HepG2 (cell line): ENCODE measurements at regions of chr10 and their contacts with region 1.

Region 1: GRCh38 chr10:121886997-121887622 is 40.7 kb downstream of the ATE1 start:
- DNase-seq: peak; percentile 61
- ATAC-seq: peak; percentile 94
- H3K4me3 ChIP-seq: no peak overlapping the region
- H3K27ac ChIP-seq: no peak overlapping the region
- H3K4me1 ChIP-seq: no peaks in the 10 kb centered on the region
- H3K27me3 ChIP-seq: no peaks in the 10 kb centered on the region
- CTCF ChIP-seq: peak; percentile 87
- EP300 ChIP-seq: no peak
- POLR2A ChIP-seq: no peak
- RAD21 ChIP-seq: peak; percentile 59; the same call in 1 of the 2 replicates

Region 2: GRCh38 chr10:120948889-120949608 is 938.1 kb before region 1 on chr10:
- CTCF ChIA-PET with region 1: no interaction called
- POLR2A ChIA-PET with region 1: no interaction called
- in situ Hi-C with region 1: loop called (anchors 5 kb)
- intact Hi-C with region 1: no loop called
- DNase-seq: peak; percentile 21
- ATAC-seq: peak; percentile 99
- H3K4me3 ChIP-seq: peak overlapping the region in 2 of 3 experiments; percentile 5 to 42; a peak in 1 of 6 replicates
- H3K27ac ChIP-seq: no peak overlapping the region
- H3K4me1 ChIP-seq: no peaks in the 10 kb centered on the region
- H3K27me3 ChIP-seq: peaks cover 0 to 11% of the 10 kb centered on the region in 2 experiments; a peak in 3 of 5 replicates
- CTCF ChIP-seq: peak; percentile 89
- EP300 ChIP-seq: no peak
- POLR2A ChIP-seq: no peak
- RAD21 ChIP-seq: peak; percentile 97

Region 3: GRCh38 chr10:121734589-121735045 is 152.5 kb before region 1 on chr10:
- CTCF ChIA-PET with region 1: no interaction called
- POLR2A ChIA-PET with region 1: no interaction called
- in situ Hi-C with region 1: no loop called
- intact Hi-C with region 1: loop called (anchors 10 kb)
- DNase-seq: peak; percentile 28
- ATAC-seq: peak; percentile 81
- H3K4me3 ChIP-seq: peak overlapping the region; percentile 11 to 62 (median 48); a peak in 5 of 6 replicates
- H3K27ac ChIP-seq: no peak overlapping the region
- H3K4me1 ChIP-seq: peaks cover 16% of the 10 kb centered on the region
- H3K27me3 ChIP-seq: peaks cover 0 to 8% of the 10 kb centered on the region in 2 experiments; a peak in 1 of 5 replicates
- CTCF ChIP-seq: peak; percentile 67
- EP300 ChIP-seq: no peak
- POLR2A ChIP-seq: no peak
- RAD21 ChIP-seq: no peak

Region 4: DNA sequence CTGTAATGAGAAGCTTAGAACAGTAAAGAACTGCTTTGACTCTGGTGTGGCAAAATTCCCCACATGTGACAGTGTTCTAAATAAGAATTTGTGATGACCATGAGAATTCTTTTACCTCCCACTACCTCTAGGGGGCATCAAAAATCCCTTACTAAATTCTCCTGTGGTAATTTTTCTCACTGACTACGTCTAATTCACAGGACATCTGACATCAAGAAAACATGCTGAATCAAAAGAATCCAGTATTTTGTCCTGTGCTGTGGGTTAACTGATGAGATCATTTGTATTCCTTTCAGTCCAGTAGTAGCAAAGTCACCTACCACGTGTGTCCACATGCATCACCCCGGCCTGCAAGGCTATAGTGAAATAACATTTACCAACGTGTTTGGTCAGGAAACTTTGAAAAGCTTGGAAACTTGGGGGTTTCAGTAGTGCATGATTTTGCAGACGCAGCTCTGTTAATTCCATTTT is 63.1 kb before region 1 on chr10:
- CTCF ChIA-PET with region 1: interaction called, 32 read pairs
- POLR2A ChIA-PET with region 1: no interaction called
- in situ Hi-C with region 1: no loop called
- intact Hi-C with region 1: loop called (anchors 1 kb)
- DNase-seq: peak; percentile 44
- ATAC-seq: peak; percentile 68; the same call in 2 of the 3 replicates
- H3K4me3 ChIP-seq: no peak overlapping the region
- H3K27ac ChIP-seq: no peak overlapping the region
- H3K4me1 ChIP-seq: no peaks in the 10 kb centered on the region
- H3K27me3 ChIP-seq: no peaks in the 10 kb centered on the region
- CTCF ChIP-seq: peak; percentile 56
- EP300 ChIP-seq: no peak
- POLR2A ChIP-seq: no peak
- RAD21 ChIP-seq: no peak; the same call in 1 of the 2 replicates

Region 5: DNA sequence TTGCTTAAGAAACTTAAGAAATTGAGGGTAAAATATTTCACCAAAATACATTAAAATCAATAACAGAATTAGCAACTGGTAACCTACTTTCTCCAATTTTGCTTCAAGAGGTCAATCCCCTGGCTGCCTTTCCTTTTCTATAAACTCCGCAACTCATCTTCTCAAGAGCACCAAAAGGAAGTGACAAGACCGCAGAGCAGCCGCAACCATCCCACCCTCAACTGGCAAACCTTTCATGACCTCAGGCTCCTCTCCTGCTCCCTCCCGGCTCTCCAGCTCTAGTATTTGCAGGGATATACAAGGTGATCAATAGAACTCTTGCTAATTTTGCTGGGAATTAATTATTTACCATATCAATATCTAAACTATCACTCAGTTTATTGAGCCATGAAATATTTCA is 48.2 kb before region 1 on chr10:
- CTCF ChIA-PET with region 1: no interaction called
- POLR2A ChIA-PET with region 1: no interaction called
- in situ Hi-C with region 1: loop called (anchors 5 kb)
- intact Hi-C with region 1: no loop called
- DNase-seq: no peak
- ATAC-seq: no peak
- H3K4me3 ChIP-seq: no peak overlapping the region
- H3K27ac ChIP-seq: no peak overlapping the region
- H3K4me1 ChIP-seq: peaks cover 21% of the 10 kb centered on the region
- H3K27me3 ChIP-seq: no peaks in the 10 kb centered on the region
- CTCF ChIP-seq: no peak
- EP300 ChIP-seq: no peak
- POLR2A ChIP-seq: no peak
- RAD21 ChIP-seq: no peak